ENCODE measurements at regions of chr1 and their contacts with region 1.

Region 1: DNA sequence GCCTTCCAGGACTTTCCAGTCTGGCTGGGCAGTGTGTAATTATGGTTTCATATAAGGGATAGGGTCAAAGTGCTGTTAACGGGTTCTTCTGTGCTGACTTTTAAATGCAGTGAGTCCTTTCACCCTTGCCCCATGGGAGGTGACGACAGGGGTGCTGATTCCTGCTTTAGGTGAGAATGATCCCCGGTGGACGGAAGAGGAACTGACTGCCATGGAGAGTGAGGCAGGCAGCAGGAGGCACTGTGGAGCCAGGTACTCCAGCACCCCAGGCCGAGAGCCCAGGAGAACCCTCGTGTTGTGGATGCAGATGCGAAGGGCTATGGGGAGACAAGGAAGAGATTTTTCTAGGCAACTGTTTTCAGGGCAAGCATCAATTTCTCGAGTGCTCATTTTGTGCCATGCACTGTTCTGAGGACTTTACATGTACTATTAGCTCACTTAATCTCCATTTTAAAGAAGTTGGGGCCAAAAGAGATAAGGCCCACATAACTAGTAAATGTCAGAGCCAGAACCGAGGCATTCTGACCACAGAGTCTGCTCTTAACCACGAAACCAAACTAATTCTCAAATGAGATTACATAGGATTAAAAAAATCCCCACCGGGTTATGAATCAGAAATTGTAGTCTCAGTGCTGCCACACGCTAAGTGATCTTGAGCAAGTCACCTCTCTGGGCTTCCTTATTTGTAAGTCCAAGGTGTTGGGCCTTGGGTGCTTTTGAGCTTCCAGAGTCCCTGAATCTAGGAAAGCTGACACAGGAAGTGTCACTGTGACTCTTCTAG is 28.2 kb downstream of the STPG1 start:
- DNase-seq: peak; percentile 47 to 77
- H3K4me3 ChIP-seq: no peak overlapping the region
- H3K27ac ChIP-seq: no peak overlapping the region
- H3K4me1 ChIP-seq: no peaks in the 10 kb centered on the region
- H3K27me3 ChIP-seq: no peaks in the 10 kb centered on the region
- CTCF ChIP-seq: peak; percentile 100
- EP300 ChIP-seq: no peak
- POLR2A ChIP-seq: no peak
- RAD21 ChIP-seq: peak; percentile 75 to 83

Region 2: DNA sequence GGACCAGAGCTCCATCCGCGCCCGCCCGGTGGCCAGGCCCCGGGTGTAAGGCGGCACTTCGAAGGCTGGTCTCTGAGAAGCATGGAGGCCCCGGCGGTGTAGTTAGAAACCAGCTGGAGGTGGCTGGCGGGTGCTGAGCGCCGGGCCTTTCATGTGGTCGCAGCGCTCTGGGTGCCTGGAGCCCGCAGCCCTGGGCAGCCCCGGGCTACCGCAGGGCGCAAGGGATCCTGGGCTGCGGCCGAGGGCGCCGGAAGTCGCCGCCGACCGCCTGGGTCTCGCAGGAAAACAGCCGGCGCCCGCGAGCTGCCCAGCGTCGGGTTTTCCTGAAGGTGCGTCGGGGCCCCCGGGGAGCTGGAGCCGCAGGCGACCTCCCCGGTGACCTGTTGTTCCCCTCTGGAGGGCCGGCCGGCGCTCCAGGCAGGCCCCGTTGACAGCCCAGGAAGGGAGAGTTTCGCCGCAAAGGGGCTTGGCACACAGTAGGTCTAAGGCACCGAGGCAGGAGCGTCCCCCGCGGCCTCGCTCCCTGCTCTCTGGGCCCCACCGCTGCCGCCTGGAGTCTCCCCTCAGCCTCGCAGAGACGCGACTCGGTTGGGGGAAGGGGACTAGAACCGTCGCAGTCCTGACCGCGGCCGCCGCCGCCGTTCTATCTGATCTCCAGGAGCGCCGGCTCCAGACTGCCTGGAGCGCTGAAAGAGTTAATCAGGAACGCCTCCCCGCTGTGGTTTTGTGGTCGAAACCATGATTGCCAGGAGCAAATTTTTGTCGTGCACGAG is 63.5 kb before region 1 on chr1:
- CTCF ChIA-PET with region 1: interaction called, 29 read pairs
- POLR2A ChIA-PET with region 1: no interaction called
- DNase-seq: no peak
- H3K4me3 ChIP-seq: peak overlapping the region; percentile 45 to 68 (median 56)
- H3K27ac ChIP-seq: no peak overlapping the region
- H3K4me1 ChIP-seq: peaks cover 8 to 22% (median 13%) of the 10 kb centered on the region in 4 experiments
- H3K27me3 ChIP-seq: peaks cover 0 to 42% (median 38%) of the 10 kb centered on the region in 4 experiments; a peak in 6 of 7 replicates
- CTCF ChIP-seq: no peak; a peak in 1 of 4 replicates
- EP300 ChIP-seq: no peak
- POLR2A ChIP-seq: no peak
- RAD21 ChIP-seq: no peak; a peak in 1 of 4 replicates

Region 3: GRCh38 chr1:24351918-24352627 is 33.3 kb before region 1 on chr1:
- CTCF ChIA-PET with region 1: interaction called, 18 read pairs
- POLR2A ChIA-PET with region 1: no interaction called
- DNase-seq: no peak
- H3K4me3 ChIP-seq: no peak overlapping the region
- H3K27ac ChIP-seq: no peak overlapping the region
- H3K4me1 ChIP-seq: no peaks in the 10 kb centered on the region
- H3K27me3 ChIP-seq: 0 out of 7 replicates have a peak, but pooled peaks cover 0 to 2% (median 0%) of the 10 kb centered on the region in 4 experiments
- CTCF ChIP-seq: no peak
- EP300 ChIP-seq: no peak
- POLR2A ChIP-seq: no peak
- RAD21 ChIP-seq: no peak

Region 4: GRCh38 chr1:24374891-24375786 is 10.2 kb before region 1 on chr1:
- CTCF ChIA-PET with region 1: interaction called, 51 read pairs
- POLR2A ChIA-PET with region 1: interaction called, 5 read pairs
- DNase-seq: peak in 1 of 2 experiments; percentile 41
- H3K4me3 ChIP-seq: no peak overlapping the region
- H3K27ac ChIP-seq: no peak overlapping the region
- H3K4me1 ChIP-seq: peaks cover 0 to 13% (median 6%) of the 10 kb centered on the region in 4 experiments; a peak in 3 of 7 replicates
- H3K27me3 ChIP-seq: no peaks in the 10 kb centered on the region
- CTCF ChIP-seq: no peak
- EP300 ChIP-seq: 0 out of 3 replicates have a peak, but pooled peaks of 1 of the 2 experiments have one; percentile 68
- POLR2A ChIP-seq: no peak
- RAD21 ChIP-seq: no peak